Activated naive CD4-positive, alpha-beta T cell treated with anti-CD3 and anti-CD28 coated beads for 36 hours (primary cell): ENCODE measurements at regions of chr22 and their contacts with region 1.

Region 1: DNA sequence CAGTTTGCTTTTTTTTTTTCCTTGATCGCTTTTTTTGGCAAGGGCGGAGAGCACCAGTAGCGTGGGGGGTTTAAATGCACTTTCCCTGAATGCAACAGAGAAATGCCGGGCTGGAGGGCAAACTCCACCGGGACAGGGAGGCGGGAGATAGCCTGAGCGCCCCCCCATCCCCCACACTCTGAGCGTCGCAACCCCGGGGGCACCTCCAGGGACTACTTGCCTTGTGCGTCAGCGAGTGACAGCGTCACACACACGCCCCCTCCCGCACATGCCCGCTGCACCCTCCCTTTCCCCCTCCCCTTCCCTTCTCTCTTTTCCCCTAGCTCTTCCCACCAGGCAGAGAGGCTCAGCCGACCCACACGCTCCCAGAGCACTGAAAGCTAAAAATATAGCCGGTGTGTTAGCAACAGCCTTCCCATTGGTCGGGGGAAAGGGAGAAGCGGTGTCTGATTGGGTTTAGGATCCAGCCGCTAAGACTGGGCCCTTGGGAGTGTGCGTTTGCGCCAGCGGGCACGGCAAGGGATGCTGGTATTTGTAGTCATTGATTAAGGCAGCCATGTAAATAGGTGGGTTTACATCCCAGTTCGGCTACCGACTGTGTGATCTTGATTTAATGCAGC is 1.7 kb upstream of the TOB2 start:
- DNase-seq: peak; percentile 96
- H3K4me3 Mint-ChIP-seq: peak overlapping the region; percentile 87
- H3K27ac Mint-ChIP-seq: peak overlapping the region; percentile 94
- H3K4me1 Mint-ChIP-seq: peaks cover 9% of the 10 kb centered on the region
- H3K27me3 Mint-ChIP-seq: no peaks in the 10 kb centered on the region

Region 2: DNA sequence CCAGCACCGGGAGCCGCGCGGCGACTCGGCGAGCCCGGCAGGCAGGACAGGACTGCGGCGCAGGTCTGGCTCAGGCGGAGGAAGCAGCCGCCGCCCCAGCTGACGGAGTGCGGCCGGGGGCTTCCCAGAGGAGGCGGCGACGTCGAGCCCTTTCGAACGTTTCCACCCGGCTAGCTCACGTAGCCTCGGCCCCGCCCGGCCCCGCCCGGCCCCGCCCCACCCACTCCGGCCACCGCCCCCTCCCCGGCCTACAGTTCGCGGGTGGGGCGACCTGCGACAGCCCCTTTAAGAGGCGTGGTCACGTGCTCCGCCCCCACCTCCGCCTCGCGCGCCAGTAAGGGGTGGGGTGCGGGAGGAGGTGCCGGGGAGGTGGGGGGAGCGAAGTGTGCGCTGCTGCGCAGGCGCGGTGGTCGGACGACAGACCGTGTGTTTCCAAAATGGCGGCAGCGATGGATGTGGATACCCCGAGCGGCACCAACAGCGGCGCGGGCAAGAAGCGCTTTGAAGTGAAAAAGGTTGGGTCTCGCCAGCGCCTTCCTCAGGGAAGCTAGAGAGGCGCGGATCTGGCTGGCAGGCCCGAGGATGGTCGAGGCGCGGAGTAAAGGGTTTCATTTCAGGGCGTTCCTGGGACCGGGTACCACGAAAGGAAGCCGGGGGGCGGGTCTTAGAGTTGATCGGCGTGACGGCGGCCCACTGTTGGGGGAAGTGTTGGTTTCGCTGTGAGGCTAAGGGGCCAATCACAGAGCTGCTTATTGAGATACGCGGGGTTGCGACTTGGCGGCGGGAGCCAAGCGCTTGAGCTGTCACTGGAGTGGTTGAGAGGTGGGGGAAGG is 497.1 kb before region 1 on chr22 and contains the start of gene RBX1:
- CTCF ChIA-PET with region 1: no interaction called
- intact Hi-C with region 1: loop called (anchors 1 kb)
- DNase-seq: peak; percentile 99
- H3K4me3 Mint-ChIP-seq: peak within 1 kb of the TSS; percentile 93
- H3K27ac Mint-ChIP-seq: peak within 1 kb of the TSS; percentile 98
- H3K4me1 Mint-ChIP-seq: peaks cover 23% of the 10 kb centered on the region
- H3K27me3 Mint-ChIP-seq: no peaks in the 10 kb centered on the region
- total RNA-seq, gene RBX1: 90.1 to 93.3 TPM

Region 3: DNA sequence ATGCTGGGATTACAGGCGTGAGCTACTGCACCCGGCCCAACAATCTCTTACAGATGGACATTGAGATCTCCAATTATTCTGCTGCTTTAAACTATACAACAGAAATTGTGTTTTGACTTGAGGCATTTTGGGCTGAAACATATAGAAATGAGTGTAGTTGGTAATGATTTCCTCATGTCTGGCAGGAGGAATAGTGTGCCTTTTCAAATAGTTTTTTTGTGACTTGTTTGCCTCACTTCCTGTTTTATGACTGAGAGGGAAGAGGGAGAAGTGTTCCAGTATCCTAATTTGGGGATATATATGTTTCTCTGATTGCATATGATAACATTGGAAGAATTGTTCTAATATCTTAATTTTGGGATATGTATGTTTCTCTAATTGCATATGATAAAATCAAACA is 315.7 kb before region 1 on chr22:
- CTCF ChIA-PET with region 1: no interaction called
- intact Hi-C with region 1: no loop called
- DNase-seq: no peak
- H3K4me3 Mint-ChIP-seq: no peak overlapping the region
- H3K27ac Mint-ChIP-seq: no peak overlapping the region
- H3K4me1 Mint-ChIP-seq: peaks cover 2% of the 10 kb centered on the region
- H3K27me3 Mint-ChIP-seq: no peaks in the 10 kb centered on the region

Region 4: GRCh38 chr22:41285820-41286638 is 162.3 kb before region 1 on chr22 and contains the start of gene RANGAP1:
- CTCF ChIA-PET with region 1: no interaction called
- intact Hi-C with region 1: loop called (anchors 1 kb)
- DNase-seq: peak; percentile 99
- H3K4me3 Mint-ChIP-seq: peak within 1 kb of the TSS; percentile 98
- H3K27ac Mint-ChIP-seq: peak within 1 kb of the TSS; percentile 100
- H3K4me1 Mint-ChIP-seq: peaks cover 37% of the 10 kb centered on the region
- H3K27me3 Mint-ChIP-seq: no peaks in the 10 kb centered on the region
- total RNA-seq, gene RANGAP1: 173 to 174 TPM

Region 5: GRCh38 chr22:41341990-41342389 is 106.3 kb before region 1 on chr22:
- CTCF ChIA-PET with region 1: no interaction called
- intact Hi-C with region 1: no loop called
- DNase-seq: peak; percentile 37
- H3K4me3 Mint-ChIP-seq: no peak overlapping the region
- H3K27ac Mint-ChIP-seq: no peak overlapping the region
- H3K4me1 Mint-ChIP-seq: peaks cover 1% of the 10 kb centered on the region
- H3K27me3 Mint-ChIP-seq: no peaks in the 10 kb centered on the region

Region 6: GRCh38 chr22:41403532-41404318 is 44.6 kb before region 1 on chr22:
- CTCF ChIA-PET with region 1: interaction called, 10 read pairs
- intact Hi-C with region 1: loop called (anchors 1 kb)
- DNase-seq: peak; percentile 92
- H3K4me3 Mint-ChIP-seq: no peak overlapping the region
- H3K27ac Mint-ChIP-seq: no peak overlapping the region
- H3K4me1 Mint-ChIP-seq: peaks cover 12% of the 10 kb centered on the region
- H3K27me3 Mint-ChIP-seq: no peaks in the 10 kb centered on the region

Region 7: GRCh38 chr22:41621099-41621910 is 173.0 kb after region 1 on chr22 and contains the start of gene XRCC6:
- CTCF ChIA-PET with region 1: interaction called, 3 read pairs
- intact Hi-C with region 1: loop called (anchors 1 kb)
- DNase-seq: peak; percentile 100
- H3K4me3 Mint-ChIP-seq: peak within 1 kb of the TSS; percentile 98
- H3K27ac Mint-ChIP-seq: peak within 1 kb of the TSS; percentile 98
- H3K4me1 Mint-ChIP-seq: peaks cover 56% of the 10 kb centered on the region
- H3K27me3 Mint-ChIP-seq: no peaks in the 10 kb centered on the region
- total RNA-seq, gene XRCC6: 424 to 436 TPM

Region 8: DNA sequence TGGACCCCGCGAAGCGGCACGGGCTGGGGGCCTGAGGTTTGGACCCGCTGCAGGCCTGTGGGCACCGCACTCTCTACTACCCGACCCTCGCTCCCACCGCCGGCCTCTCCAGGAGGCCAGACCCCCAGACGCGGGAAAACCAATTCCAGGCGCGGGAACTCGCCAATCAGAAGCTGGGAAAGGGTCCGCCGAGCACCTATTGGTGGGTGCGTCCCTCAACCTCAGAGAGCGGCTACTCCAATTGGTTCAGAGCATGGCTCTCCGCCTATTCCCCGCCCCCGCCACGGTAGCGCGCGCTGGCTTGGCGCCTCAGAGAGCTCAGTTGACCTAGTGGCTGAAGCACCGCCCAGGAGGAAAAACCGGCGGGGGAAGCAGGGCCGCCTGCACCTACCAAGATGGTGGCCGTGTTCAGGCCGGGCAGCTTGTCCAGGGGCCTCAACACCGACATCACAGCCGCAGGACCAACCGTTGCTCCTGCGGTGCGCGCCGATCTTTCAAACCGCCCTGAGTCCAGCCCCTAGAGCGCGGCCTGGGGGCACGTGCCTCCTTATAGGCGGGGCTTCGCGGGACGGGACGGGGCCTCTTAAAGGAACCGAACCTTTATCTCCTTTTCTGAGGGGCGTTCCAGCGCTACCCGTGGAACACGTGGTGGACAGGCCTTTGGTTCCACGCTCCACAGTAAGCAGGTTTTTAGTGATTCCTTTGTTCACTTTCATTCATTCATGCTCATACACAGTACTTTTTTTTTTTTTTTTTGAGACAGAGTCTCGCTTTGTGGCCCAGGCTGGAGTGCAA is 498.5 kb after region 1 on chr22 and contains the start of gene CENPM:
- CTCF ChIA-PET with region 1: no interaction called
- intact Hi-C with region 1: loop called (anchors 10 kb)
- DNase-seq: peak; percentile 97
- H3K4me3 Mint-ChIP-seq: peak within 1 kb of the TSS; percentile 95
- H3K27ac Mint-ChIP-seq: peak within 1 kb of the TSS; percentile 87
- H3K4me1 Mint-ChIP-seq: peaks cover 58% of the 10 kb centered on the region
- H3K27me3 Mint-ChIP-seq: no peaks in the 10 kb centered on the region
- total RNA-seq, gene CENPM: 95.4 to 110 TPM